ENCODE measurements at regions of chr9 and their contacts with region 1.

Region 1: DNA sequence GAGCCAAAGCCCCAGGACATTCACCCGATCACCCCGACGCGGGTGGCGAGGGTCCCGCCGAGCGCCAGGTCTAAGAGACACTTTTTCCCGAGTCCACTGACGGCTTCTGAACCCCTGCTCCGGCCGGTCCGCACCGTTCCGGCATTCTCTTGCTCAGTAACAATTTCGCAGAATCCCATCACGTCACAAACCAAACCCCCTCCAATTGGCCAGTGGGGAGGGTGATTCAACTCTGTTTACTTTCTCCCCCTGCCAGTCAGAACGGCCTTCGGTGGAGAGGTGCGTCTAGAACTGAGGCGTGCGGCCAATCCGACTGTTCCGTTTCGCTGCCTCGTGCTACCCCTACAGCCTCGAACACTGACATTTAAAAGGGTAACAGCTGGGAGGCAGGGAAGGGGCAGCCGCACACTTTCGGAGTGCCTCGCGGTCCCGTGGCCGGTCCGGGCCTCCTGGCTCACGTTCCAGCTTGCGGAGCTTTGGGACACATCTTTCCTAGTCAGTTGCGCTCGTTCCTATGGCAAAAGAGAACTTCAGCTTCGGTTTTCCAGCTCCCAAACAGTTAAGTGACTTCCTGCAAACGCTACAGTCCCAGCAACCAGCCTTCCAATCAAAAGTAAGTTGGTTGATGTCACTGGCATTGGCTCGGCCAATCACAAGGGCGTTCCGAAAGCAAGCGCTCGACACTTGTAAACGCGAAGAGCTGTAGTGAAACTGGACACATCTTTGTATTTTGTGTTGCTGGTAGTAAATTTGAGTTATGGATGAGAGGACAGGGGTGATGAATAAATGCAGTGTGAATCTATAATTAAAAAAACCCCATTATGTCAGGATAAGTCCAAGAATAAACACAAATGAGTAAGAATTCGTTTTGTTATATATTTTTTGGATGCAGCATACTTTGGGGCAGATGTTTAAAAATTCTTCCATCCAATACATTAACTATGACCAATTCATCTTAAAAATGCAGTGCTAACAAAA is at the start of gene KLF9:
- DNase-seq: peak; percentile 95
- ATAC-seq: peak; percentile 76
- H3K4me3 Mint-ChIP-seq: peak within 1 kb of the TSS; percentile 99
- H3K27ac Mint-ChIP-seq: peak within 1 kb of the TSS; percentile 100
- H3K4me1 Mint-ChIP-seq: peaks cover 38% of the 10 kb centered on the region
- H3K27me3 Mint-ChIP-seq: no peaks in the 10 kb centered on the region
- total RNA-seq, gene KLF9: 20.2 to 22.3 TPM

Region 2: GRCh38 chr9:69035438-69036308 is 1378.4 kb before region 1 on chr9 and contains the start of gene FXN:
- CTCF ChIA-PET with region 1: no interaction called
- POLR2A ChIA-PET with region 1: no interaction called
- intact Hi-C with region 1: loop called in 1 of 2 experiments (anchors 10 kb)
- DNase-seq: peak; percentile 91
- ATAC-seq: peak; percentile 94
- H3K4me3 Mint-ChIP-seq: peak within 1 kb of the TSS; percentile 89
- H3K27ac Mint-ChIP-seq: peak within 1 kb of the TSS; percentile 91
- H3K4me1 Mint-ChIP-seq: peaks cover 20% of the 10 kb centered on the region
- H3K27me3 Mint-ChIP-seq: no peaks in the 10 kb centered on the region
- total RNA-seq, gene FXN: 23.2 to 24.2 TPM

Region 3: DNA sequence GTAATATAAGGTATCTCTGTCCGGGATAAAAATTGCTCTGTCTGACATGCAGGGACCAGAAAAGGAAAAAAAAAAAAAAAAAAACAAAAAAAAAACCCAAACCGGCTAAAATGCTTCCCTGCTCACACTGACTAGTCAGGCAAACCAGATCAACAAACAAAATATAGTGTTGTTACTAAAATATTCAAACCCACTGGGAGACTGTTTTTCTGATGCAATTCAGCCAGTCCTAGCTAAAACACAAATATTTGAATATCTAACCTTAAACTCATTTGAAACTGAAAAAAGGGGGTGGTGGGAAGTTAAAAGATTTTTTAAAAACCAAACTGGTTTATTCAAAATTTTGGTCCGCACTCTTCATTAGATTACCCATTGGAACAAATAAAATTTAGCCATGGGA is 802.9 kb before region 1 on chr9:
- CTCF ChIA-PET with region 1: no interaction called
- POLR2A ChIA-PET with region 1: no interaction called
- intact Hi-C with region 1: no loop called
- DNase-seq: no peak
- ATAC-seq: no peak
- H3K4me3 Mint-ChIP-seq: no peak overlapping the region
- H3K27ac Mint-ChIP-seq: no peak overlapping the region
- H3K4me1 Mint-ChIP-seq: no peaks in the 10 kb centered on the region
- H3K27me3 Mint-ChIP-seq: peaks cover 2% of the 10 kb centered on the region

Region 4: GRCh38 chr9:70258692-70259511 is 155.2 kb before region 1 on chr9 and contains the start of gene SMC5:
- CTCF ChIA-PET with region 1: no interaction called
- POLR2A ChIA-PET with region 1: interaction called, 3 read pairs
- intact Hi-C with region 1: loop called (anchors 1 kb)
- DNase-seq: peak; percentile 92
- ATAC-seq: peak; percentile 83
- H3K4me3 Mint-ChIP-seq: peak within 1 kb of the TSS; percentile 89
- H3K27ac Mint-ChIP-seq: peak within 1 kb of the TSS; percentile 96
- H3K4me1 Mint-ChIP-seq: peaks cover 54% of the 10 kb centered on the region
- H3K27me3 Mint-ChIP-seq: no peaks in the 10 kb centered on the region
- total RNA-seq, gene SMC5: 39.0 to 43.0 TPM

Region 5: GRCh38 chr9:70519912-70520724 is 106.0 kb after region 1 on chr9:
- CTCF ChIA-PET with region 1: no interaction called
- POLR2A ChIA-PET with region 1: interaction called, 4 read pairs
- intact Hi-C with region 1: loop called (anchors 2 to 5 kb)
- DNase-seq: peak; percentile 34
- ATAC-seq: peak; percentile 94
- H3K4me3 Mint-ChIP-seq: peak overlapping the region; percentile 44
- H3K27ac Mint-ChIP-seq: peak overlapping the region; percentile 69
- H3K4me1 Mint-ChIP-seq: peaks cover 20% of the 10 kb centered on the region
- H3K27me3 Mint-ChIP-seq: no peaks in the 10 kb centered on the region

Region 6: DNA sequence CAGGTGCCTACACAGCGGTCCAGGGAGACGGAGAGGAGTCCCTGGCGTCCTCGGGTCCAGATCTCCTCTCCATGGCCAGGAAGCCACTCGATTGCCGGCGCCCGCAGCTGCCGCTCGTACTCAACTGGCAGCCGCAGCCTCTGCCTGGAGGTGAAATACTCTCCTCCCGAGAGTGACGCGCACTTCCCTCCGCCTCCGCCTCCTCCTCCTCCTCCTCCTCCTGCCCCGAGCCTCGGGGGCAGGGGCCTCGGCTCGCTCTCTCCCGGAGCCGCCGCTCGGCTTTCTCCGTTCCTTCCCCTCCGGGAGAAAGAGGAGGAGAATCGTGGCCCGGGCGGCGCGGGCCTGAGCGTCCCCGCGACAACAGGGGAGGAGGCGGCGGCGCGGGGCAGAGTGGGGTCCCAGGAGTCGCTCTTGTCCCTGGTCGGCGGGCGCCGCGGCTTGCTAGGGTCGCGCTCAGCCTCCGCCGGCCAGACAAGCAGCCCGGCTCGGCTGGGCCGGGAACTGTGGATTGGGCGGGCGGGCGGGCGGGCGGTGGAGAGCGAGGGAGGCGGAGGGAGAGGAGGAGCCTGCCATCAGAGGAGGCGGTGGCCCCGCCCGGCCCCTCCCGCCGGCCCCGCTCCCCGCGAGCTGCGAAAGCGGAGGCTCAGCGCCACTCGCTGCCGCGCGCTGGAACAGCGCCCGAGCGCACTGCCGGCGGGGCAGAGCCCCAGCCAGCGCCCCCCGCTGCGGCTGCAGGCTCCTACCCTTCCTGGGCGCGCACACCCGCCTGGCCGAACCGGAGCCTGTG is 1354.5 kb after region 1 on chr9 and contains the start of gene CEMIP2:
- CTCF ChIA-PET with region 1: no interaction called
- POLR2A ChIA-PET with region 1: no interaction called
- intact Hi-C with region 1: loop called in 1 of 2 experiments (anchors 5 kb)
- DNase-seq: peak; percentile 94
- ATAC-seq: peak; percentile 78
- H3K4me3 Mint-ChIP-seq: peak within 1 kb of the TSS; percentile 94
- H3K27ac Mint-ChIP-seq: peak within 1 kb of the TSS; percentile 91
- H3K4me1 Mint-ChIP-seq: peaks cover 43% of the 10 kb centered on the region
- H3K27me3 Mint-ChIP-seq: no peaks in the 10 kb centered on the region
- total RNA-seq, gene CEMIP2: 34.1 to 41.0 TPM

Region 7: GRCh38 chr9:72364679-72365524 is 1950.8 kb after region 1 on chr9 and contains the start of gene ZFAND5:
- CTCF ChIA-PET with region 1: no interaction called
- POLR2A ChIA-PET with region 1: no interaction called
- intact Hi-C with region 1: loop called (anchors 2 to 10 kb)
- DNase-seq: peak; percentile 97
- ATAC-seq: peak; percentile 84
- H3K4me3 Mint-ChIP-seq: peak within 1 kb of the TSS; percentile 91
- H3K27ac Mint-ChIP-seq: peak within 1 kb of the TSS; percentile 99
- H3K4me1 Mint-ChIP-seq: peaks cover 37% of the 10 kb centered on the region
- H3K27me3 Mint-ChIP-seq: no peaks in the 10 kb centered on the region
- total RNA-seq, gene ZFAND5: 72.0 to 88.2 TPM

Measured in activated CD4-positive, alpha-beta T cell treated with anti-CD3 and anti-CD28 coated beads for 36 hours (primary cell).